ENCODE measurements at regions of chr14 and their contacts with region 1.

Region 1: GRCh38 chr14:53850714-53851296 is 105.8 kb downstream of the BMP4 start:
- DNase-seq: peak; percentile 50 to 57
- H3K4me3 ChIP-seq: peak overlapping the region; percentile 10
- H3K4me3 Mint-ChIP-seq: peak overlapping the region; percentile 75
- H3K27ac Mint-ChIP-seq: peak overlapping the region; percentile 86
- H3K4me1 ChIP-seq: peaks cover 68% of the 10 kb centered on the region
- H3K4me1 Mint-ChIP-seq: peaks cover 38% of the 10 kb centered on the region
- H3K27me3 ChIP-seq: no peaks in the 10 kb centered on the region
- H3K27me3 Mint-ChIP-seq: no peaks in the 10 kb centered on the region
- CTCF ChIP-seq: no peak

Region 2: DNA sequence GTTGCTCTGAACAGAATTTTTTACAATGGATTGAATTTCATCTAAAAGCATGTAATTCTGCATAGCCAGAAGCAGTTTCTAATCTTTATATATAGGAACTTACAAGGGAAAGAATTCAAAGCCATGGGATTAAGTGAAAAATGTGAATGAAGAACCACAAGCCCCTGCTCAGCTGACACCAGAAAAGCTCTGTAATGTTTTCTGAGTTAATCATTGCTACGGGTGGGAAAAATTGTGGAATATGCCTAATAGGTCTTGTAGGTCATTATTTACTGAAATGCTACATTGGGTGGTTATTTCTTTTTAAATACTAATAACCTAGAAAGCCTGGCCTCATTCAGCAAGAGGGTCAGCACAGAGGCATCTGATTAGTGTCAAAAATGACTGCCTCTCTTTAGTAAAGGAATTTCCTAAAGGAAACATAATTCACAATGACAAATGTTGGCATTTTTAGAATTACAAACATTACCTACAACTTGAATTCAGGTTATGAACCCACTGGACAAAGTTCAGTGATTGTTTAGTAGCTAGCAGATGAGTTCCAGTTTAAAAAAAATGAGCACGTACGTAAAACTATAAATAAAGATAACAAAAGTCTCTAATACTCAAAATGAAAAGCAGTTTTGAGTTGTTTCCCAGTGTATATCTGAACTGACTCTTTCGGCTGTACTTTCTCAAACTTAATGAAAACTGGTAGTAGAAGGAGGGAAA is 30.5 kb after region 1 on chr14:
- CTCF ChIA-PET with region 1: no interaction called
- POLR2A ChIA-PET with region 1: interaction called, 4 read pairs
- intact Hi-C with region 1: loop called (anchors 2 kb)
- DNase-seq: peak; percentile 38 to 59
- H3K4me3 ChIP-seq: peak overlapping the region; percentile 8
- H3K4me3 Mint-ChIP-seq: peak overlapping the region; percentile 56
- H3K27ac Mint-ChIP-seq: peak overlapping the region; percentile 59
- H3K4me1 ChIP-seq: peaks cover 41% of the 10 kb centered on the region
- H3K4me1 Mint-ChIP-seq: peaks cover 34% of the 10 kb centered on the region
- H3K27me3 ChIP-seq: no peaks in the 10 kb centered on the region
- H3K27me3 Mint-ChIP-seq: no peaks in the 10 kb centered on the region
- CTCF ChIP-seq: no peak

Region 3: GRCh38 chr14:53888535-53889386 is 38.0 kb after region 1 on chr14:
- CTCF ChIA-PET with region 1: no interaction called
- POLR2A ChIA-PET with region 1: no interaction called
- intact Hi-C with region 1: loop called (anchors 2 kb)
- DNase-seq: peak in 1 of 2 experiments; percentile 46
- H3K4me3 ChIP-seq: peak overlapping the region; percentile 13; the same call in 1 of the 2 replicates
- H3K4me3 Mint-ChIP-seq: peak overlapping the region; percentile 59
- H3K27ac Mint-ChIP-seq: peak overlapping the region; percentile 45
- H3K4me1 ChIP-seq: peaks cover 42% of the 10 kb centered on the region
- H3K4me1 Mint-ChIP-seq: peaks cover 48% of the 10 kb centered on the region
- H3K27me3 ChIP-seq: no peaks in the 10 kb centered on the region
- H3K27me3 Mint-ChIP-seq: no peaks in the 10 kb centered on the region
- CTCF ChIP-seq: no peak

Region 4: DNA sequence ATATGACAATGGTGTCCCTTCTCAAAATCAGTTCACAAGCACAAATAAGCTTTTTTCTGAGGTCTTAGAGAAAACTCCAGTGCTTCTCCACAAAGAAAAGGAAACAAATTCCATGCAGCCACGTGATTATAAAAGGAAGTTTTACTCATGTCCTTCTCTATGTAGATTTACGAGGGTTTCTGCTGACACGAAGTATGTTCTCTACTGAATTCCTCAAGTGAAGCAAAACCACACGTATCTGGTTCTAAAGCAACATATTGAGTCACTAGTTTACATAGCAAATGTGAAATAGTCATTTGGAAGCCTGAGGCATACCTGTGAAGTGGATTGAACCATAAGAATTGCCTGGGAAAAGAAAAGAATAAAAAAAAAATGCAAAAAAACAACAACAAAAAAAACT is 73.9 kb after region 1 on chr14:
- CTCF ChIA-PET with region 1: no interaction called
- POLR2A ChIA-PET with region 1: no interaction called
- intact Hi-C with region 1: loop called (anchors 2 kb)
- DNase-seq: no peak
- H3K4me3 ChIP-seq: no peak overlapping the region
- H3K4me3 Mint-ChIP-seq: no peak overlapping the region
- H3K27ac Mint-ChIP-seq: peak overlapping the region; percentile 27
- H3K4me1 ChIP-seq: peaks cover 63% of the 10 kb centered on the region
- H3K4me1 Mint-ChIP-seq: peaks cover 66% of the 10 kb centered on the region
- H3K27me3 ChIP-seq: no peaks in the 10 kb centered on the region
- H3K27me3 Mint-ChIP-seq: no peaks in the 10 kb centered on the region
- CTCF ChIP-seq: no peak

Measured in Caco-2 (cell line).